ENCODE measurements at regions of chr11 and their contacts with region 1.

Region 1: GRCh38 chr11:62694455-62695167 is 5.3 kb upstream of the LRRN4CL start:
- DNase-seq: peak; percentile 82
- ATAC-seq: peak; percentile 92
- H3K4me3 ChIP-seq: no peak overlapping the region
- H3K27ac ChIP-seq: no peak overlapping the region
- H3K4me1 ChIP-seq: peaks cover 2% of the 10 kb centered on the region; the same call in 1 of the 2 replicates
- H3K27me3 ChIP-seq: no peaks in the 10 kb centered on the region
- CTCF ChIP-seq: peak; percentile 73
- POLR2A ChIP-seq: no peak
- RAD21 ChIP-seq: peak; percentile 72

Region 2: GRCh38 chr11:62383822-62384221 is 310.8 kb before region 1 on chr11:
- CTCF ChIA-PET with region 1: no interaction called
- POLR2A ChIA-PET with region 1: no interaction called
- dilution Hi-C with region 1: no loop called
- in situ Hi-C with region 1: no loop called
- intact Hi-C with region 1: loop called (anchors 1 kb)
- DNase-seq: no peak
- ATAC-seq: no peak
- H3K4me3 ChIP-seq: no peak overlapping the region
- H3K27ac ChIP-seq: no peak overlapping the region
- H3K4me1 ChIP-seq: no peaks in the 10 kb centered on the region
- H3K27me3 ChIP-seq: peaks cover 9% of the 10 kb centered on the region
- CTCF ChIP-seq: no peak
- POLR2A ChIP-seq: no peak
- RAD21 ChIP-seq: no peak

Region 3: DNA sequence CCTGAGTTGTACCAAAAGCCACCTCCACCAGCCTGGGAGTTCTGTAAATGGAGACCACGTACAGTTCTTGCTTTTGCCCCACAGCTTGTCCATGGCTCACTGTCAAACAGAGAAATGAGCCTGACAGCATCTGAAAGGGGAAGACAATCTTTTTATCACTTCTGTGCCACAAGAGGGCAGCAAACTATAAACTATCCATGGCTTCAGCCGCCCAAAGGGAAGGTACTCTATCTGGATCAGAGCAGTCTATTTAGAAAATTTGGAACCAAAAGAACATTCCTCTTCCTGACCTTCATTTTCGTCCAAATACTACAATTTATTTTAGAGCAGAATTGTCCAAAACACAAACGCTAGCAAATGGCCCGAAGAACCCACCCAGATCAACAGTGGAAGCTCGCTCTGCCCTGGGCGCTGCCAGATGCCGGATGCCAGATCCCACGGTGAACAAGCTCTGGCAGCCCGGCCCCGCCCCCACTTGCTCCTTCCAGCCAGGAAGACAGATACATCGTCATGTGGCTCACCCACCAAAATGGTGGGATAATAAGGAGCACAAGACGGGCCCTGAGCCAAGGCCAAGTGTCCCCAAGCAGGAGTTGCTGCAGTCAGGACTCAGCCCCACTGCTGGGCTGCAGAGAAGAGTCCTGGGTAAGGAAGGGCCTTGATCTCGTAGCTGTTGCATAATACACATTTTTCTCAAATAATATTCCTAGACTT is 299.6 kb before region 1 on chr11:
- CTCF ChIA-PET with region 1: interaction called, 4 read pairs
- POLR2A ChIA-PET with region 1: no interaction called
- dilution Hi-C with region 1: no loop called
- in situ Hi-C with region 1: loop called (anchors 10 kb)
- intact Hi-C with region 1: loop called (anchors 1 kb)
- DNase-seq: peak; percentile 80
- ATAC-seq: peak; percentile 86
- H3K4me3 ChIP-seq: peak overlapping the region; percentile 36
- H3K27ac ChIP-seq: peak overlapping the region; percentile 54
- H3K4me1 ChIP-seq: peaks cover 15% of the 10 kb centered on the region; the same call in 1 of the 2 replicates
- H3K27me3 ChIP-seq: peaks cover 2% of the 10 kb centered on the region; the same call in 1 of the 2 replicates
- CTCF ChIP-seq: peak; percentile 80
- POLR2A ChIP-seq: no peak
- RAD21 ChIP-seq: peak; percentile 88

Region 4: DNA sequence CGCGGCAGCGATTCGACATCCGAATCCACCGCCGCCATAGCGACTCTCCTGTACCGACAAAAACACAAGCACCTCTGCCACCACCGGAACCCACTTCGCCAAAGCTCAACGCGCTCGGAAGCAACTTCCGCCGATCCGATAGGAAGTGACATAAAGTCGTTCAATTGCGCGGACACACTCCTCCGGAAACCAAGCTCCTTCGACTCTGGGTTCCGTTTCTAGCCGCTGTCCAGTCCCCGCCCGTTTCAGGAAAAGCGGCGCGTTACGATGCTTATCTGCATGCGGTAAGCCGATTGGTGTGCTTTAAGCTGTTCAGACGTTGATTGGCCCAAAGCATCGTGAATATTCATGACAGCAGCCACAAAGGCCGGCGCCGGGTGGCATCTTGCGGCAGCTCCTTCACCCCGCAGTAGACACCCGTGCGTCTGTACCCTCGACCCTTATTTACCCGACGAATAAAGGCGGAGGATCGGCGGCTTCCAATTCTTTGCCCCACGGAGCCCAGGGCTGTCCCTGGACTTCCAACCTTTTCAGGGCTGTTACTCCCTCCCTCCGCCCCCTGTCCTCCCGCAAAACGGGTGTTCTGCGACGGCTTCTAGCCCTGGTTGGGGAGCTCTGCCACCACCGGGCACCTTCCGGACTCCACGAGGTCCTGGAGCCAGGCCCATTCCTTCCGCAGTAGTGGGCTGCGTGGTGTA is 103.0 kb before region 1 on chr11 and contains the start of gene TUT1:
- CTCF ChIA-PET with region 1: interaction called, 4 read pairs
- POLR2A ChIA-PET with region 1: no interaction called
- dilution Hi-C with region 1: no loop called
- in situ Hi-C with region 1: no loop called
- intact Hi-C with region 1: loop called (anchors 10 kb)
- DNase-seq: peak; percentile 99
- ATAC-seq: peak; percentile 97
- H3K4me3 ChIP-seq: peak within 1 kb of the TSS; percentile 66
- H3K27ac ChIP-seq: peak within 1 kb of the TSS; percentile 73
- H3K4me1 ChIP-seq: peaks cover 6% of the 10 kb centered on the region
- H3K27me3 ChIP-seq: no peaks in the 10 kb centered on the region
- CTCF ChIP-seq: no peak
- POLR2A ChIP-seq: peak; percentile 94
- RAD21 ChIP-seq: 0 out of 2 replicates have a peak, but pooled peaks have one; percentile 4
- total RNA-seq, gene TUT1: 3.3 and 4.3 TPM in 2 replicates

Region 5: GRCh38 chr11:62678770-62679696 is 15.6 kb before region 1 on chr11 and contains the start of gene UBXN1:
- CTCF ChIA-PET with region 1: interaction called, 11 read pairs
- POLR2A ChIA-PET with region 1: interaction called, 3 read pairs
- dilution Hi-C with region 1: no loop called
- in situ Hi-C with region 1: no loop called
- intact Hi-C with region 1: loop called (anchors 2 kb)
- DNase-seq: peak; percentile 83
- ATAC-seq: peak; percentile 73
- H3K4me3 ChIP-seq: peak within 1 kb of the TSS; percentile 94
- H3K27ac ChIP-seq: peak within 1 kb of the TSS; percentile 96
- H3K4me1 ChIP-seq: peaks cover 8% of the 10 kb centered on the region
- H3K27me3 ChIP-seq: no peaks in the 10 kb centered on the region
- CTCF ChIP-seq: no peak
- POLR2A ChIP-seq: peak; percentile 80
- RAD21 ChIP-seq: no peak
- total RNA-seq, gene UBXN1: 50.0 and 83.0 TPM in 2 replicates

Region 6: DNA sequence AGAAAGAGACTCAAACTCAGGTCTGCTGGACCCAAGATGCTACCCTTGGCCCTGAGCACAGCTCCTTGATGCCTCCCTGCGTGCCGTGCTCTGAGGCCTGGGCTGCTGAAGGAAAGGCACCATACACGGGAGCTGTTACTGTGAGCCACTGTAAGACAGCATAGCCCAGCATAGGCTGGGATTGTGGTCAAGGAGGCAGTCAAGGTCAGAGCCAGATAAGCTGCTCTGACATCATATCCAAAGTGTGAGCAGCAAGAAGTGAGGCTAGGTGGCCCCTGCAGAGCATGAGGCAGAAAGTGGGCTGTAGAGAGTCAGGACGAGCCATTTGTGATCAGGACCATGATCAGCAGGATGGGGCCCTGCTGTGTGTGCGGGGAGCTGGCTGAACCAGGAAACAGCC is 313.3 kb after region 1 on chr11:
- CTCF ChIA-PET with region 1: no interaction called
- POLR2A ChIA-PET with region 1: no interaction called
- dilution Hi-C with region 1: no loop called
- in situ Hi-C with region 1: no loop called
- intact Hi-C with region 1: no loop called
- DNase-seq: no peak
- ATAC-seq: no peak
- H3K4me3 ChIP-seq: no peak overlapping the region
- H3K27ac ChIP-seq: no peak overlapping the region
- H3K4me1 ChIP-seq: no peaks in the 10 kb centered on the region
- H3K27me3 ChIP-seq: peaks cover 18% of the 10 kb centered on the region
- CTCF ChIP-seq: no peak
- POLR2A ChIP-seq: no peak
- RAD21 ChIP-seq: no peak

Measured in IMR-90 (cell line).